ENCODE measurements at regions of chr6 and their contacts with region 1.

Region 1: GRCh38 chr6:30571075-30571768 is at the start of gene ABCF1:
- DNase-seq: peak; percentile 99
- H3K4me3 Mint-ChIP-seq: peak within 1 kb of the TSS; percentile 97
- H3K27ac Mint-ChIP-seq: peak within 1 kb of the TSS; percentile 97
- H3K4me1 Mint-ChIP-seq: peaks cover 63% of the 10 kb centered on the region
- H3K27me3 Mint-ChIP-seq: no peaks in the 10 kb centered on the region
- total RNA-seq, gene ABCF1: 64.3 to 65.2 TPM

Region 2: GRCh38 chr6:30200551-30201281 is 370.5 kb before region 1 on chr6:
- CTCF ChIA-PET with region 1: no interaction called
- POLR2A ChIA-PET with region 1: no interaction called
- DNase-seq: no peak
- H3K4me3 Mint-ChIP-seq: no peak overlapping the region
- H3K27ac Mint-ChIP-seq: no peak overlapping the region
- H3K4me1 Mint-ChIP-seq: peaks cover 44% of the 10 kb centered on the region
- H3K27me3 Mint-ChIP-seq: no peaks in the 10 kb centered on the region

Region 3: DNA sequence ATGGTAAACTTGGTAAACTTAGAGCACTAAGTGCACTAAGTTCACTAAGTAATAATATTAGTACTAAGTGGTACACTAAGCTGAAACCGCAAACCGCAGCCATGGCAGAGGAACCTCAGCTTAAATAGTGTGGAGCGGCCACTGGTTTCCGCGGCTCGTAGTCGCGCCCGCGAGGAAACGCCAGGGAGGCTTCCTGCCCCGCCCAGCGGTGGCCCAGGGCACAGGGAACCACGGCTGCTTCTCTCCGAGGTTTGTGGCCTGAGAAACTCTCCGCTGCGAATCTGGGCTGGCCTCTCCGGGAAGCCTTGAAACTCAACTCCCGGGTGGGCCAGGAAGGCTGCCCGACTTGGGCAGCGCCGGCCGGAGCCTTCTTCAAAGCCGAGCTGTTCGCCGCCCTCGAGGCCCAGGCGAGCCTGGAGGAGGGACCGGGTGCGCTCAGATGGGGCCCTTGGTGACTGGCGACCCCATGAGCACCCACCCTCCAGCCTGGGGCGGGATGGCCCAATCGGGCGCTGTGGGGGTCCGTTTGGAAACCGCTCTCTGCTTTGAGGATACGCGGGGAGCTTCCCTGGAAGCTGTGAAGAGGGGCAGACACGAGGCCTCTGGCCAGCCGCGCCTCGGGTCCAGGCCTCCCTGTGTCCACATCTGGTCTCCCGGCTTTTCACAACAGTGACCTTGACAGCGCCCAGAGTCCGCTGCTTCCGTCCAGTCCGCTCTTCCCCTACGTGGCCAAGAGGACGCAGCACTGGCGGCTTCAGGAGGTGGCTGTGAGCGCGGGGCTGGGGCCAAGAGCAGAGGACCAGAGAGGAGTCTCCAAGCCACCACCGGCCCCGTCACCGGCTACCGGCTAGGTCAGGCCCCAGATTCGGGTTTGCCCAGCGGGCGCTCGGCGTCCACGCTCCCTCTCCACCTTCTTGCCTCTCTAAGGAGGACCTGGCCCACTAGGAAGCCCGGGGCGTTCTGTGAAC is 107.3 kb before region 1 on chr6:
- CTCF ChIA-PET with region 1: no interaction called
- POLR2A ChIA-PET with region 1: no interaction called
- DNase-seq: peak; percentile 83
- H3K4me3 Mint-ChIP-seq: no peak overlapping the region
- H3K27ac Mint-ChIP-seq: no peak overlapping the region
- H3K4me1 Mint-ChIP-seq: peaks cover 37% of the 10 kb centered on the region
- H3K27me3 Mint-ChIP-seq: peaks cover 87% of the 10 kb centered on the region

Region 4: GRCh38 chr6:30556066-30556905 is 14.9 kb before region 1 on chr6 and contains the start of gene GNL1:
- CTCF ChIA-PET with region 1: interaction called, 15 read pairs
- POLR2A ChIA-PET with region 1: interaction called, 61 read pairs
- DNase-seq: peak; percentile 98
- H3K4me3 Mint-ChIP-seq: peak within 1 kb of the TSS; percentile 95
- H3K27ac Mint-ChIP-seq: peak within 1 kb of the TSS; percentile 99
- H3K4me1 Mint-ChIP-seq: peaks cover 45% of the 10 kb centered on the region
- H3K27me3 Mint-ChIP-seq: no peaks in the 10 kb centered on the region
- total RNA-seq, gene GNL1: 62.1 to 70.8 TPM

Region 5: DNA sequence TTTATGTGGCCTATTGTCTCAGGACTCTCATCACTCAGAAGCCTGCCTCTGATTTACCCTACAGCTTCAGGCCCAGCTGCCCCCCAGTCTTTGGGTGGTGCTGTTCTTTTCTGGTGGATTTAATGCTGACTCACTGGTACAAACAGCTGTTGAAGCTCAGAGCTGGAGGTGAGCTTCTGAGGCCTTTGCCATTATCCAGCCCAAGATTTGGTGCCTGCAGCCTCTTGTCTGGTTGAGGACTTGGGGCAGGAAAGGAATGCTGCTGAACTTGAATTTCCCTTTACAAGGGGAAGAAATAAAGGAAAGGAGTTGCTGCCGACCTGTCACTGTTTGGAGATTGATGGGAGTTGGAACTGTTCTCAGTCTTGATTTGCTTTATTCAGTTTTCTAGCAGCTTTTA is 19.8 kb after region 1 on chr6:
- CTCF ChIA-PET with region 1: interaction called, 4 read pairs
- POLR2A ChIA-PET with region 1: interaction called, 11 read pairs
- DNase-seq: no peak
- H3K4me3 Mint-ChIP-seq: no peak overlapping the region
- H3K27ac Mint-ChIP-seq: no peak overlapping the region
- H3K4me1 Mint-ChIP-seq: peaks cover 3% of the 10 kb centered on the region
- H3K27me3 Mint-ChIP-seq: no peaks in the 10 kb centered on the region

Measured in activated CD4-positive, alpha-beta memory T cell treated with anti-CD3 and anti-CD28 coated beads, Interleukin-2, amount 10 ng/mL, durations not matched to agents 7 days and 5 days (primary cell).